ENCODE measurements at regions of chr6 and their contacts with region 1.

Region 1: GRCh38 chr6:55774286-55774935 is 101.0 kb downstream of the BMP5 start:
- DNase-seq: no peak
- H3K4me3 ChIP-seq: no peak overlapping the region
- H3K27ac ChIP-seq: no peak overlapping the region
- H3K4me1 ChIP-seq: no peaks in the 10 kb centered on the region
- H3K27me3 ChIP-seq: no peaks in the 10 kb centered on the region
- CTCF ChIP-seq: no peak
- POLR2A ChIP-seq: no peak

Region 2: DNA sequence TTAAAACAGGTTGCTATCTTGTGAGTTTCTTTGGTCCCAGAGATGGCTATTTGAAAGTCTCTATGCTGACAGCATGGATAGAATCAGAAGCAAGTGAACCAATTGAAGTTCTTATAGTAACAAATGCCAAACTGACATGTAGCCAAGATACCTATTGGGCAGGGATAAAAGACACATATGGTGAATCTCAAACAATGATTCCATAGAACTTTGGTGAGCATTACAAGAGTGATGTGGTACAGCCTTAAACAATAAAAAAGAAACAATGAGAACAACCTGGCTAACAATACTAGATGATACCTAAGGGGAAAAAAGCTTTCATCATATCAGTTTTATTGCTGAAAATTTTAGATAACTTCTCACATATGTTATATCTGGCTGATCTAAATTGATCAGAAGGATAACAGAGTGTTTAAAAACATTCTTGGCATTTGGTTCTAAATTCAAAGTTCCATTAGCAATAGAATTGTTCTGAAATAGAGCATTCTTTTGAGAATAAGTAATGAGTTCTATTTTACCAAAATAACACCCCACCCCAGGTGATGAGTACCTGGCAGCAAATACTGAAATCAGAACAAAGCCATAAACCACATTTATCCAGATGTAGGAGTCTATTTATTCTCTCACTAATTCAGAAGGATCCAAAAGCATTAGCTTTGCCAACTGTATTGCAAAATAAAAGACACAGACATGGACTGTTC is 189.6 kb before region 1 on chr6:
- intact Hi-C with region 1: loop called (anchors 5 kb)
- DNase-seq: no peak
- H3K4me3 ChIP-seq: no peak overlapping the region
- H3K27ac ChIP-seq: peak overlapping the region in 1 of 2 donors; percentile 16
- H3K4me1 ChIP-seq: peaks cover 0 to 4% of the 10 kb centered on the region in 2 donors
- H3K27me3 ChIP-seq: no peaks in the 10 kb centered on the region
- CTCF ChIP-seq: no peak
- POLR2A ChIP-seq: no peak

Region 3: GRCh38 chr6:55758156-55758888 is 16.1 kb before region 1 on chr6:
- intact Hi-C with region 1: loop called (anchors 2 kb)
- DNase-seq: peak in 1 of 2 donors; percentile 49
- H3K4me3 ChIP-seq: no peak overlapping the region
- H3K27ac ChIP-seq: peak overlapping the region; percentile 80 to 83
- H3K4me1 ChIP-seq: no peaks in the 10 kb centered on the region
- H3K27me3 ChIP-seq: no peaks in the 10 kb centered on the region
- CTCF ChIP-seq: no peak
- POLR2A ChIP-seq: no peak